ENCODE measurements at regions of chr5 and their contacts with region 1.

Region 1: GRCh38 chr5:179668391-179668790 is 12.4 kb downstream of the CBY3 start:
- DNase-seq: no peak

Region 2: DNA sequence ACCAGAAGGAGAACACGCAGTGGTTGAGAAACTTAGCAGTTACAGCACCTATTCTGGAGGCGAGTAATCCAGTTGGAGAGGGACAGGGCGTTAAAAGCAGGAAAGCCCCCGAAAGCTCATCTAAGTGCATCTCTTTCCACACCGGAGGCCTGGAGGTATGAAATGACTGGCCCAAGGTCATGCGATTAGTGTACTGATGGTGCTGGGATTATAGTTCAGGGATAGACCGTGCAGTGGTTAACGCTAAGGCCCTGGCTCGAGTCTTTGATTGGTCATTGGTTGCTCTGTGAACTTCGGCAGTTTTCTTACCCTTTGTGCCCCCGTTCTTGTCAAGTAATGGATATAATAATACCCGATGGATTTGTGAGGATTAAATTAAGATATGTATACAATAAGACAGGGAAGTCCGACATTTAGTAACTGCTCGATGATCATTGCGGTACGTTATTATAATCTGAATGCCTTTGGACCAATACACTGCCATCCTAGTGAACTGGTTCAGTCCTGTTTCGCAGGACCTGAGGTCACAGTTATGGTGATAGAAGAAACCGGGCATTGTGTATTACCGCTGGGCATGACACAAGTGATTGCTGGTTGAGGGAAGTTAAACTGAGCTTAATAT is 31.3 kb after region 1 on chr5:
- intact Hi-C with region 1: loop called in 1 of 2 experiments (anchors 5 kb)
- DNase-seq: peak; percentile 24

Region 3: GRCh38 chr5:180069589-180070247 is 401.3 kb after region 1 on chr5:
- intact Hi-C with region 1: no loop called
- DNase-seq: no peak